ENCODE measurements at regions of chr7 and their contacts with region 1.

Region 1: GRCh38 chr7:87886875-87887274 is 10.6 kb downstream of the DBF4 start:
- DNase-seq: no peak
- H3K4me3 Mint-ChIP-seq: no peak overlapping the region
- H3K27ac Mint-ChIP-seq: no peak overlapping the region
- H3K4me1 Mint-ChIP-seq: peaks cover 20% of the 10 kb centered on the region
- H3K27me3 Mint-ChIP-seq: no peaks in the 10 kb centered on the region

Region 2: GRCh38 chr7:87506246-87507180 is 380.4 kb before region 1 on chr7:
- intact Hi-C with region 1: loop called (anchors 5 kb)
- DNase-seq: no peak
- H3K4me3 Mint-ChIP-seq: no peak overlapping the region
- H3K27ac Mint-ChIP-seq: no peak overlapping the region
- H3K4me1 Mint-ChIP-seq: peaks cover 12% of the 10 kb centered on the region
- H3K27me3 Mint-ChIP-seq: no peaks in the 10 kb centered on the region

Measured in activated CD4-positive, alpha-beta T cell treated with anti-CD3 and anti-CD28 coated beads, Interleukin-2, amount 10 ng/mL, durations not matched to agents 24 days and 14 days (primary cell).